Naive thymus-derived CD4-positive, alpha-beta T cell (primary cell): ENCODE measurements at regions of chr10 and their contacts with region 1.

Region 1: DNA sequence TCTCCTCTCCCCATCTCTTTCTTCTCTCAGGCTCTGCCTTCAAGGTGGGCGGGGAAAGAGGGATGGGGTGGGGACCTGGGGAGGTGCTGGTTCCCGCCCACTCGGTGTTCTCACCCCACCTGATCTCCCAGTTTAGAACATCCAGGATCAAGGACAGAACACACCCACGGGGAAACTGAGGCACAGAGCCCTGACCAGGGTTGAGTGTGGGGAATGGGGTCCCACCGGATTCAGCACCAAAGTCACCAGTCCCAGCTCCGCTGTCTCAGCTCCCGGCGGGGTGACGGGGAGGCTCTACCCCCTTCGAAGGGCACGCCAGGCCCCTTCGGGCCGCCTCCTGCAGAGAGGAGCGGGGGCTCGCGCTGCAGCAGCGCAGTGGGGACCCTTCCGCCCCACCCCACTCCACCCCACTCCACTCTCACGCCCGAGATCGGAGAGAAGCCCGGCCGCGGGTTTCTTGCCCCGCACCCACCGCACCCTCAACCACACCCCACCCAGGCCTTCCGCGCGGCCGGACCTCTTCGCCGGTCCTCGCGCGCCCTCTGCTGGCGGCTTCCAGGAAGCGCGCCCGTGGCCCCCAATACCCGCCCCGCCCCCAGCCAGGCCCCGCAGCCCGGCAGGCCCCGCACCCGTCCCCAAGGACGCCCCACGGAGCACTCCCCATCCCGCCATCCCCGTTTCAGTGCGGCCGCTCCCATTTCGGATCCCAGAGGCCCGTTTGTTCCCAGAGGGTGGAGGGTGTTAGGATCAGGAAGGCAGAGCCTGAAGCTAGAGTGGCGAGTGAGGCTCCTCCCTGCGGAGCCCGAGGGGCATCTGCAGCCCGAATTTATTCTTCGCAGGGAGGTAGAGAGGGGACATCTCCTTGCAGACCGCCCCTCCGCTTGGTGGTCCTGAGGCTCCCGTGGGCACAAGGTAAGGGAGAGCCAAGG is 18.0 kb downstream of the POLL start:
- DNase-seq: peak; percentile 62 to 88 (median 77)
- ATAC-seq: peak; percentile 95
- H3K4me3 ChIP-seq: peak overlapping the region; percentile 69
- H3K4me3 Mint-ChIP-seq: peak overlapping the region; percentile 50 to 80 (median 74)
- H3K27ac ChIP-seq: no peak overlapping the region
- H3K27ac Mint-ChIP-seq: peak overlapping the region in 1 of 9 donors; percentile 43
- H3K4me1 ChIP-seq: peaks cover 4 to 17% of the 10 kb centered on the region in 2 donors
- H3K4me1 Mint-ChIP-seq: peaks cover 0 to 21% (median 13%) of the 10 kb centered on the region in 7 donors
- H3K27me3 ChIP-seq: peaks cover 0 to 10% of the 10 kb centered on the region in 2 donors
- H3K27me3 Mint-ChIP-seq: peaks cover 31 to 47% (median 45%) of the 10 kb centered on the region in 5 donors

Region 2: DNA sequence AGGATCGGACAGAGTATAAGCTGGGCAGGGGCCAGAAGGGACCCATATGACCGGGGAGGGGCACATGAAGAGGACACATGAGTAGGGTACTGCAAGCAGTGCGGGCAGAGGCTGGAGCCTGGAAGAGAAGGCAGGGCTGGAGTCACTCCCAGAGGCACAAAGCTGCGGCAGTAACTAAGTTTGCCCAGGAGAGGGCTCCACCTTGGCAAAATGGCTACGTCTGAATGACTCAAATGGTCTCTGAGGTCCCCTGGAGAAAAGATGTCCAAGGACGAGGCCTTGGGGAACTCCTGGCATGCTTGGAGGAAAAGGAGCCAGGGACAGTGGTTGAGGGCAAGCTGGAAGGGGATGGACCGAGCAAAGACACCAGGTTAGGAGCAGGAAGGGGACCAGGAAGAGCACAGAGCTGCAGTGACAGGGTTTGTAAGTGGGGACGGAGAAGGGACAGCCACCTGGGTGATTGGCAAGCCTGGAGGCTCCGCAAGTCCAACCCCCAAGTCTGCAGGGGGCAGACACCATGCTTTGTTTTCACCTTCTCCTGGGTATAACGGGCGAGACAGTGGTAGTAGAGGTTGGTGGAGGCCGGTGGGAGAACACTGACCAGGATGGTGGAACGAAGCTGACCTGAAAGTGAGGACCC is 297.8 kb before region 1 on chr10:
- CTCF ChIA-PET with region 1: interaction called, 3 read pairs
- POLR2A ChIA-PET with region 1: no interaction called
- intact Hi-C with region 1: loop called in 1 of 2 experiments (anchors 1 kb)
- DNase-seq: peak in 8 of 9 donors; percentile 18 to 57 (median 44)
- ATAC-seq: peak; percentile 81
- H3K4me3 ChIP-seq: no peak overlapping the region
- H3K4me3 Mint-ChIP-seq: no peak overlapping the region
- H3K27ac ChIP-seq: no peak overlapping the region
- H3K27ac Mint-ChIP-seq: no peak overlapping the region
- H3K4me1 ChIP-seq: no peaks in the 10 kb centered on the region
- H3K4me1 Mint-ChIP-seq: peaks cover 0 to 8% (median 2%) of the 10 kb centered on the region in 7 donors
- H3K27me3 ChIP-seq: no peaks in the 10 kb centered on the region
- H3K27me3 Mint-ChIP-seq: peaks cover 20 to 39% (median 32%) of the 10 kb centered on the region in 5 donors

Region 3: GRCh38 chr10:101467286-101467770 is 102.8 kb before region 1 on chr10:
- CTCF ChIA-PET with region 1: interaction called, 4 read pairs
- POLR2A ChIA-PET with region 1: no interaction called
- intact Hi-C with region 1: loop called in 1 of 2 experiments (anchors 2 kb)
- DNase-seq: peak in 7 of 9 donors; percentile 22 to 64 (median 52)
- ATAC-seq: peak; percentile 90
- H3K4me3 ChIP-seq: no peak overlapping the region
- H3K4me3 Mint-ChIP-seq: no peak overlapping the region
- H3K27ac ChIP-seq: no peak overlapping the region
- H3K27ac Mint-ChIP-seq: no peak overlapping the region
- H3K4me1 ChIP-seq: no peaks in the 10 kb centered on the region
- H3K4me1 Mint-ChIP-seq: peaks cover 0 to 12% (median 9%) of the 10 kb centered on the region in 7 donors
- H3K27me3 ChIP-seq: no peaks in the 10 kb centered on the region
- H3K27me3 Mint-ChIP-seq: peaks cover 0 to 3% (median 0%) of the 10 kb centered on the region in 5 donors

Region 4: GRCh38 chr10:101552442-101552841 is 17.7 kb before region 1 on chr10:
- CTCF ChIA-PET with region 1: no interaction called
- POLR2A ChIA-PET with region 1: no interaction called
- intact Hi-C with region 1: no loop called
- DNase-seq: no peak
- ATAC-seq: no peak
- H3K4me3 ChIP-seq: no peak overlapping the region
- H3K4me3 Mint-ChIP-seq: no peak overlapping the region
- H3K27ac ChIP-seq: no peak overlapping the region
- H3K27ac Mint-ChIP-seq: peak overlapping the region in 1 of 9 donors; percentile 82
- H3K4me1 ChIP-seq: no peaks in the 10 kb centered on the region
- H3K4me1 Mint-ChIP-seq: peaks cover 0 to 4% (median 3%) of the 10 kb centered on the region in 7 donors
- H3K27me3 ChIP-seq: no peaks in the 10 kb centered on the region
- H3K27me3 Mint-ChIP-seq: no peaks in the 10 kb centered on the region

Region 5: GRCh38 chr10:101580486-101581399 is 10.6 kb after region 1 on chr10:
- CTCF ChIA-PET with region 1: interaction called, 14 read pairs
- POLR2A ChIA-PET with region 1: no interaction called
- intact Hi-C with region 1: no loop called
- DNase-seq: no peak
- ATAC-seq: no peak
- H3K4me3 ChIP-seq: no peak overlapping the region
- H3K4me3 Mint-ChIP-seq: no peak overlapping the region
- H3K27ac ChIP-seq: no peak overlapping the region
- H3K27ac Mint-ChIP-seq: peak overlapping the region in 2 of 9 donors; percentile 22 to 41
- H3K4me1 ChIP-seq: no peaks in the 10 kb centered on the region
- H3K4me1 Mint-ChIP-seq: peaks cover 0 to 11% (median 8%) of the 10 kb centered on the region in 7 donors
- H3K27me3 ChIP-seq: no peaks in the 10 kb centered on the region
- H3K27me3 Mint-ChIP-seq: no peaks in the 10 kb centered on the region

Region 6: GRCh38 chr10:101773923-101774588 is 204.0 kb after region 1 on chr10:
- CTCF ChIA-PET with region 1: no interaction called
- POLR2A ChIA-PET with region 1: no interaction called
- intact Hi-C with region 1: no loop called
- DNase-seq: no peak
- ATAC-seq: no peak
- H3K4me3 ChIP-seq: no peak overlapping the region
- H3K4me3 Mint-ChIP-seq: peak overlapping the region in 6 of 10 donors; percentile 18 to 71 (median 48)
- H3K27ac ChIP-seq: no peak overlapping the region
- H3K27ac Mint-ChIP-seq: no peak overlapping the region
- H3K4me1 ChIP-seq: peaks cover 0 to 19% of the 10 kb centered on the region in 2 donors
- H3K4me1 Mint-ChIP-seq: peaks cover 9 to 34% (median 28%) of the 10 kb centered on the region in 7 donors
- H3K27me3 ChIP-seq: peaks cover 8 to 35% of the 10 kb centered on the region in 2 donors
- H3K27me3 Mint-ChIP-seq: peaks cover 51 to 74% (median 63%) of the 10 kb centered on the region in 5 donors